ENCODE measurements at regions of chr14 and their contacts with region 1.

Region 1: GRCh38 chr14:49633640-49634546 is 1.2 kb downstream of the DNAAF2 start:
- DNase-seq: peak; percentile 95
- H3K4me3 Mint-ChIP-seq: peak overlapping the region; percentile 92
- H3K27ac Mint-ChIP-seq: peak overlapping the region; percentile 97
- H3K4me1 Mint-ChIP-seq: peaks cover 42% of the 10 kb centered on the region
- H3K27me3 Mint-ChIP-seq: no peaks in the 10 kb centered on the region

Region 2: DNA sequence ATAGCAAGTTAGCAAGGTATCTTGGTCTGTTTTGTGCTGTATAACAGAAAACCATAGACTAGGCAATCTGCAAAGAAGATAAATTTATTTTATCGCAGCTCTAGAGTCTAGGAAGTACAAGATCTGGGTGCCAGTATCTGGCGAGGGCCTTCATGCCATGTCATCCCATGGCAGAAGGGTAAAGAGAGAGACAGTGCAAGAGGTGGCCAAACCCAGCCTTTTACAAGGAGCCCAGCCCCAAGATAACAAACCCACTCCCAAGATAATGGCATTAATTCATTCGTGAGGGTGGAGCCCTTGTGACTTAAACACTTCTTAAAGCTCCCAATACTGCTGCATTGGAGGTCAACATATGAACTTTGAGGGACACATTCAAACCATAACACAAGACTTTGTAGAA is 64.6 kb before region 1 on chr14:
- CTCF ChIA-PET with region 1: no interaction called
- POLR2A ChIA-PET with region 1: no interaction called
- DNase-seq: no peak
- H3K4me3 Mint-ChIP-seq: no peak overlapping the region
- H3K27ac Mint-ChIP-seq: no peak overlapping the region
- H3K4me1 Mint-ChIP-seq: no peaks in the 10 kb centered on the region
- H3K27me3 Mint-ChIP-seq: no peaks in the 10 kb centered on the region

Region 3: DNA sequence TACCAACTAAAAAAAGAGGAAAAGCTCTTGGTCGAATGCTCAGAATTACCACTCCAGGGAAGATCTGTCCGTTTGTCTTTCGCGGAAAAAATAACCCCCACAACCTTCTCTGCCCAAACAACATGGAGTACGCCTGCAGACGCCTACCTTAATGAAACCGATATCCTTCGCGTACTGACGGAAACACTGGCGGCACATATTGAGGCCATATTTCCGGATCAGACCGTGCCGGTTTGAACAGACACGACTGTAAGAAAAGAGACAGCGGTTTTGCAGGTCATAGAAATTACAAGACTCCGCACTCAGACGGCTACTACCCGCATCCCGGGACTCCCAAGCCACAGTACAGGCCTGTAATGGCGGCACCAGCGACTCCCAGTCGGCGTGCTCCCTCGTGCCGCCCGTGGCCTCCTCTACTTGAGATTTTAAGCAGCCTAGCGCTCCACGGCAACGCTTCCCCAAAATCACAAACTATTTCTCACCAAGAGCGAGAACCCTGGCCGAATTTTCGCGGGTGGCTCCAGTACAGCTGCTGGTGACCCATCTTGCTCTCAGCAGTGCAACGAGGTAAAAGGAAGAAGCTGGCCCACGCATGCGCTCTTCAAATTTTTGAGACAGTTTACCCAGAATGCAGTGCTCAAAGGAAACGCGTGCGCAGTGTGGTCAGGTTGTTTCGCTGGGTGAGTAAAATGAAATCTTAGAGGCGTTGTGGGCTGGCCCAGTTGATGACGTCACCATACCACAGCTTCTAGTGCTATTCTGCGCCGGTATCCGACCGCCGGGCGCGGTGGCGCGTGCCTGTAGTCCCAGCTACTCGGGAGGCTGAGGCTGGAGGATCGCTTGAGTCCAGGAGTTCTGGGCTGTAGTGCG is 47.9 kb before region 1 on chr14 and contains the start of gene RPS29:
- CTCF ChIA-PET with region 1: interaction called, 28 read pairs
- POLR2A ChIA-PET with region 1: interaction called, 3 read pairs
- DNase-seq: peak; percentile 99
- H3K4me3 Mint-ChIP-seq: peak within 1 kb of the TSS; percentile 80
- H3K27ac Mint-ChIP-seq: peak within 1 kb of the TSS; percentile 100
- H3K4me1 Mint-ChIP-seq: peaks cover 49% of the 10 kb centered on the region
- H3K27me3 Mint-ChIP-seq: no peaks in the 10 kb centered on the region
- total RNA-seq, gene RPS29: 860 to 1,679 TPM

Region 4: GRCh38 chr14:49598485-49599300 is 35.2 kb before region 1 on chr14 and contains the start of gene LRR1:
- CTCF ChIA-PET with region 1: interaction called, 10 read pairs
- POLR2A ChIA-PET with region 1: no interaction called
- DNase-seq: peak; percentile 87
- H3K4me3 Mint-ChIP-seq: peak within 1 kb of the TSS; percentile 99
- H3K27ac Mint-ChIP-seq: peak within 1 kb of the TSS; percentile 100
- H3K4me1 Mint-ChIP-seq: peaks cover 42% of the 10 kb centered on the region
- H3K27me3 Mint-ChIP-seq: peaks cover 2% of the 10 kb centered on the region
- total RNA-seq, gene LRR1: 45.5 to 53.2 TPM

Region 5: GRCh38 chr14:49620182-49621113 is 13.4 kb before region 1 on chr14 and contains the starts of genes MGAT2 and RPL36AL:
- CTCF ChIA-PET with region 1: interaction called, 67 read pairs
- POLR2A ChIA-PET with region 1: interaction called, 15 read pairs
- DNase-seq: peak; percentile 96
- H3K4me3 Mint-ChIP-seq: peak within 1 kb of the TSS; percentile 97
- H3K27ac Mint-ChIP-seq: peak within 1 kb of the TSS; percentile 97
- H3K4me1 Mint-ChIP-seq: peaks cover 50% of the 10 kb centered on the region
- H3K27me3 Mint-ChIP-seq: no peaks in the 10 kb centered on the region
- total RNA-seq, gene MGAT2: 53.1 to 57.3 TPM
- total RNA-seq, gene RPL36AL: 249 to 262 TPM

Region 6: DNA sequence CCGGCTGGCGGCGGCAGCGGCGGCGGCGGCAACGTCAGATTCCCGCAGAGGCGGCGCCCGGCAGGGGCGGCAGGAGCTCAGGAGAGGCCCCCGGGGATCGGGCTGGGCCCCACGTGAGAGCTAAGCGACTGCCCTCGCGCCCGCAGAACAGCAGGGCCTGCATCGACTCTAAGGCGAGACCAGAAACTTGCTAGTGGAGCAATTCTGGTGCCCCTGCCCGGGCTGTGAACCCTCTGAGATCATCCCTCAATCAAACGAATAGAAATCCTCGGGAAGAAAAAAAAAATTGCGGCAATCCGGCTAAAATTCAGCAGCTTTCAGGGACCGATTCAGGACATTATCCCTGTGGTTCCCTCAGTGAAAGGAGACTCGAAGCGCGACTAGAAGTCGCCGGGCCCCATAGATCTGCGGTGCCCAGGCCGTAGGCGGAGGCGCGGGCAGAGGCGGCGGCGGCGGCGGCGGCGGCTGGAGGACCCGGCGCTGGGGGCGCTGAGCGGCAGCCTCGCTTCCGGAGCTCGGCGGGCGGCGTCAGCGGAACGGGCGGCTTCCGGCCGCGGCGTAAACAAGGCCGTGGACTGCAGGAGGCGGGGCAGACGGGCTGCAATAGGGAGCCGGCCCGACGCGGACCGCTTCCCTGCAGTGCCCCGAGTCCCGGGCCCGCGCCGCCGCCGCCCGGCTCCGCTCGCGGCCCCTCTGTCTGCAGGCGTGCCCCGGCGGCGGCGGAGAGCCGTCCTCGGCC is 133.8 kb after region 1 on chr14 and contains the start of gene KLHDC2:
- CTCF ChIA-PET with region 1: interaction called, 17 read pairs
- POLR2A ChIA-PET with region 1: interaction called, 5 read pairs
- DNase-seq: peak; percentile 88
- H3K4me3 Mint-ChIP-seq: peak within 1 kb of the TSS; percentile 92
- H3K27ac Mint-ChIP-seq: peak within 1 kb of the TSS; percentile 99
- H3K4me1 Mint-ChIP-seq: peaks cover 36% of the 10 kb centered on the region
- H3K27me3 Mint-ChIP-seq: no peaks in the 10 kb centered on the region
- total RNA-seq, gene KLHDC2: 28.7 to 31.5 TPM